Calu3 (cell line): ENCODE measurements at regions of chr1 and their contacts with region 1.

Region 1: GRCh38 chr1:161071886-161072371 is 2.2 kb upstream of the ARHGAP30 start:
- DNase-seq: peak; percentile 71
- H3K4me3 Mint-ChIP-seq: no peak overlapping the region
- H3K27ac Mint-ChIP-seq: peak overlapping the region; percentile 38
- H3K4me1 Mint-ChIP-seq: no peaks in the 10 kb centered on the region
- H3K27me3 Mint-ChIP-seq: no peaks in the 10 kb centered on the region
- CTCF ChIP-seq: peak; percentile 80

Region 2: DNA sequence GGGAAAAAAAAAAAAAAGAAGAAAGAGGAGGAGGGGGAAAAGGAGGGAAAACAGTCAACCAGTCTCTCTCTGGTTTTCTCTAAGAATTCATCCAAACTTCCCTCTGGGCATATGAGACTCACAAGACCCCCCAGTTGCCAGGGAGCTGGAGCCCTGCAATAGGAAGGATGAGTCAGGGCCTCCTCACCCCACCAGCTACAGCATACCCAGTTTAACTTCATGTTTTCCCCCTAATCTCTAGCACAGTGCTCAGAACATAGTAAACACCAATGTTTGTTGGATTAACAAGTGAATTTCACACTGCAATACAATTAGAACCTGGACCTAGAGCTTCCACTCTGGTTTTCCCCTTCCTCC is 58.8 kb before region 1 on chr1:
- CTCF ChIA-PET with region 1: no interaction called
- intact Hi-C with region 1: no loop called
- DNase-seq: no peak
- H3K4me3 Mint-ChIP-seq: peak overlapping the region; percentile 44
- H3K27ac Mint-ChIP-seq: peak overlapping the region; percentile 95
- H3K4me1 Mint-ChIP-seq: peaks cover 59% of the 10 kb centered on the region
- H3K27me3 Mint-ChIP-seq: no peaks in the 10 kb centered on the region
- CTCF ChIP-seq: no peak

Region 3: GRCh38 chr1:161054805-161055204 is 17.1 kb before region 1 on chr1:
- CTCF ChIA-PET with region 1: no interaction called
- intact Hi-C with region 1: no loop called
- DNase-seq: no peak
- H3K4me3 Mint-ChIP-seq: no peak overlapping the region
- H3K27ac Mint-ChIP-seq: no peak overlapping the region
- H3K4me1 Mint-ChIP-seq: no peaks in the 10 kb centered on the region
- H3K27me3 Mint-ChIP-seq: no peaks in the 10 kb centered on the region
- CTCF ChIP-seq: no peak

Region 4: GRCh38 chr1:161089171-161089924 is 17.4 kb after region 1 on chr1 and contains the start of gene NECTIN4:
- CTCF ChIA-PET with region 1: interaction called, 10 read pairs
- intact Hi-C with region 1: no loop called
- DNase-seq: peak; percentile 88
- H3K4me3 Mint-ChIP-seq: peak within 1 kb of the TSS; percentile 77
- H3K27ac Mint-ChIP-seq: peak within 1 kb of the TSS; percentile 71
- H3K4me1 Mint-ChIP-seq: peaks cover 88% of the 10 kb centered on the region
- H3K27me3 Mint-ChIP-seq: no peaks in the 10 kb centered on the region
- CTCF ChIP-seq: no peak
- total RNA-seq, gene NECTIN4: 24.9 and 42.4 TPM in 2 replicates

Region 5: GRCh38 chr1:161153679-161154426 is 81.9 kb after region 1 on chr1 and contains the start of gene UFC1:
- CTCF ChIA-PET with region 1: no interaction called
- intact Hi-C with region 1: no loop called
- DNase-seq: peak; percentile 84
- H3K4me3 Mint-ChIP-seq: peak within 1 kb of the TSS; percentile 98
- H3K27ac Mint-ChIP-seq: peak within 1 kb of the TSS; percentile 100
- H3K4me1 Mint-ChIP-seq: peaks cover 28% of the 10 kb centered on the region
- H3K27me3 Mint-ChIP-seq: no peaks in the 10 kb centered on the region
- CTCF ChIP-seq: no peak
- total RNA-seq, gene UFC1: 77.5 and 85.8 TPM in 2 replicates